ENCODE measurements at regions of chr9 and their contacts with region 1.

Region 1: DNA sequence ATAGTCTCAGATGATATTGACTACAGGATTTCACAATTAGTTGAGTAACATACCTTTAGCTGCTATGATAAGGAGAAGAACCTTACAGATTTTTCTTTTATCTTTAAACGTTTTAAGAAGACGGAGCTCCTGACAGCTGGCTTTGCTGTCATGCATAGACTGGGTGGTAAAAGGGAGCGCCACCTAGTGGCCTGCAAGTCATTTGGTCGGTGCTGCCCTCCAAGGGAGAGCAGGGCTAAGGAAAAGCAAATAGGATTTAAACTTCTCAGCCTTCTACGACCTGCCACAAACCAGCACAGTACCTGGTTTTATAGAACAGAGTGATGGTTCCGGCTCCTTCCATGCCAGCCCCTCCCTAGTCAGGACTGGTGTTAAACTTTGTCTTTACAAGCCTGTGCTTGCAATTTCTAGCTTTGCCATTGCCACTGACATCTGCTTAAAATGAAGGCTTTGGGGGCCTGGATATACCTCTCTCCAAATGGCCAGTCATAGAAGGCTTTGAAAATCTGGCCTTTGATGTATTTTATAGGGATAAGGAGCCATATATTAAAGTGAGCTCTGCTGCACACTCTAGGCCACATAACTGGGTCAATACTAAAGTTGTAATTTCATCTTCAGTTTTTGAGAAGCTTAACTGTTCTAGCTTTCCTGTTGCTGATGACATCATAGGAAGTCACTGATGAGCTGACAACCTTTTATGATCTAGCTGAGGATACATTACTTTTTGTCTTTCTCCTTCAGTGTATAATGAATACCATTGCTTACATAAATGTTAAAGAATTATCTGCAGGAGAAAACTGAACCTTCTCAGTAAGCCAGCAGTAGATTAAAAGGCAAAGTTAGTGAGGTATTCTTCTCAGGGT is 31.1 kb upstream of the ADAMTSL1 start:
- H3K4me3 ChIP-seq: no peak overlapping the region
- H3K27ac ChIP-seq: no peak overlapping the region
- H3K4me1 ChIP-seq: no peaks in the 10 kb centered on the region; the same call in 1 of the 2 replicates
- CTCF ChIP-seq: peak; percentile 56; the same call in 1 of the 2 replicates

Region 2: GRCh38 chr9:18238254-18238653 is 204.6 kb before region 1 on chr9:
- CTCF ChIA-PET with region 1: interaction called, 12 read pairs
- POLR2A ChIA-PET with region 1: no interaction called
- H3K4me3 ChIP-seq: no peak overlapping the region
- H3K27ac ChIP-seq: no peak overlapping the region
- H3K4me1 ChIP-seq: peaks cover 2% of the 10 kb centered on the region; the same call in 1 of the 2 replicates
- CTCF ChIP-seq: no peak

Region 3: DNA sequence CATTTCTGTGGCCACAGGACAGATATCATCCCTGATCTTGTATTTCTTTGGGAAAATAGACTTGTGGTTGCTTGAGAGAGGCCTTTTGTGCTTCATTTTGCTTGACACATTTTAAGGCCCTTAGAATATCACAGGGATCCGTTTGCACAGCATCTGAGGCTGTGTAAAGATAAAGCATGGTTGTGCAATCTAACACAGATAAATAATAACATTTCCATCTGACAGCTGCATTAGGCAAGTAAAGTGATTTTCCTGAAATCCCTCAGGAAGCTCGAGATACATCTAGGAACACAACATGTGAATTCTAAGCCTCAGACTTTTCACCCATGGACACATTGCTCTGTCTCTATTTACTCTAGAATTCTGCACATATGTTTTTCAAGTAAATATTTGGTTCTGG is 181.7 kb before region 1 on chr9:
- CTCF ChIA-PET with region 1: interaction called, 117 read pairs
- POLR2A ChIA-PET with region 1: interaction called, 3 read pairs
- H3K4me3 ChIP-seq: no peak overlapping the region
- H3K27ac ChIP-seq: no peak overlapping the region
- H3K4me1 ChIP-seq: peaks cover 2% of the 10 kb centered on the region; the same call in 1 of the 2 replicates
- CTCF ChIP-seq: no peak

Region 4: DNA sequence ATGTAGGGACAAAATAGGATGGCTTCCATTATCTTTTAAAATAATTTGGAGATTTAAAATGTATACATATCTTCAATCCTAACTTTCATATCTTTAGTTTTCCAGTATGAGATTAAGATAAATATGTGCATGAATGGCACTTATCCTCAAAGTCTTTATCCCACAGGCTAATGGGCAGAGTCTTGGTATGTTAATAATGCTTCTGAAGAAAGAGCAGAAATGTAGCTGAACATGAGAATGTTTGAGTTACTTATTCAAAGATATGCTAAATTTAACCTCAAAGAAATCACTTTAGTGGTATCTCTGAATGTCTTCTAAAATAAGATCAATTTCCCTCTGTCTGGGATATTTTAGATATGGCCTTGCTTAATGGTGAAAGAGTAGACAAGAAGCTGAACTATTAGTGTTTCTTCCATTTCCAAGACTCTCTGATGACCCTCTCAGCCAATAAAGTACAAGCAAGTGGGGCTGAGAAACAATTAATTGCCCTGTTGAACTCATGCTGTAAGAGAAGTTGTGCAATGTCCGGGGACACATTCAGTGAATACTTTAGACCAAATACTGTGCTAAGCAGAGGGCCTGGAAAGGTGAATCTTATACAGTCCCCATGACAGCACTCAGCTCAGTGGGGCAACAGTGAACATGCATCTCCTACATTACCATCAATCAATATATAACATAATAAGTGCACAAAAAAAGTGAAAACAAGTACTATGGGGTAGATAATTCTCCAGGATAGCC is 18.9 kb before region 1 on chr9:
- CTCF ChIA-PET with region 1: interaction called, 33 read pairs
- POLR2A ChIA-PET with region 1: no interaction called
- H3K4me3 ChIP-seq: no peak overlapping the region
- H3K27ac ChIP-seq: no peak overlapping the region
- H3K4me1 ChIP-seq: peaks cover 4% of the 10 kb centered on the region
- CTCF ChIP-seq: no peak

Region 5: DNA sequence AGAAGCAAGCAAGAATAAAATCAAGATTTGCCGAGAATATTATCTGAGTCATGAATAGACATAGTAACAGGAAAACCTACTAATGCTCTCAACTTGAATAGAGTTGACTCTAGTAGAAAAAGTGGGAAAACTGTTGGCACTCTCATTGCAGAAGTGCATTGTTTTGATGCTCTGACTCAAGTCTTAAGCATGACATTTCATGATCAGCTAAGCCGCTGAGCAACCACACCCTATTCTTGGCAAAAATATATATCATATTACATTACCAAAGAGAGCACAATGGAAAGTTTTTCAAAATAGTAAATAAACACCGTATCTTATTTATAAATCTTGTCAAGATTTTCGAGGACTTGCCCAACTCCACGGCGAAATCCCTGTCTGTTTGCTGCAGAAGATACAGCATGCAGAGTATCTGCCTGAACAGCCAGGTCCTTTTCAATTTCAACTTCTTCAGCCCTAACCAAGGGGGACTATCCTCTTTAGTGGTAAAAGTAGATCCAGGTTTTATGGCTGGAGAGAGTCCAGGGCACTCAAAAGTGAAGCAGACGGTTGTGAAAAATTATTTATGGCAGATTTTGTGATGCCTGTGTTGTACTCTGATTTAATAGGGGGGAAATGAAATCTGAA is 17.2 kb after region 1 on chr9:
- CTCF ChIA-PET with region 1: interaction called, 99 read pairs
- POLR2A ChIA-PET with region 1: no interaction called
- H3K4me3 ChIP-seq: no peak overlapping the region
- H3K27ac ChIP-seq: no peak overlapping the region
- H3K4me1 ChIP-seq: no peaks in the 10 kb centered on the region
- CTCF ChIP-seq: no peak

Region 6: DNA sequence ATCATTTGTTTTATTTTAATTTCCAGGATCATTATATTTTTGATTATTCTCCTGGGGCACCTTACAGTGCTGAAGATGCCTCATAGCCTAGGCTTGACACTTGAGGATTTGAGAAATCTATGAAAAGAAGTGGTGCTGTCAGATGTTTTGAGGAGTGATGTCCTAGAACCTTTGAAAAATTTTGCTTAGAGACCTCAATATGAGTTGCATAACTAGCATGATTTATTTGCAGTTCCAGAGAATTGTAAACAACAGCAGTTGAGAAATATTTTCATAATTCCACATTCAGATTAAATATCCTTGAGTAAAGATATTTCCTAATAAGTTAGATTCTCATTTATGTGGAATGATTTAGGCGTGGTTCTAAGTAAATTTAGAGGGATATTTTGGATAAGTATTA is 256.9 kb after region 1 on chr9:
- CTCF ChIA-PET with region 1: no interaction called
- POLR2A ChIA-PET with region 1: no interaction called
- H3K4me3 ChIP-seq: no peak overlapping the region
- H3K27ac ChIP-seq: no peak overlapping the region
- H3K4me1 ChIP-seq: 0 out of 2 replicates have a peak, but pooled peaks cover 2% of the 10 kb centered on the region
- CTCF ChIP-seq: no peak

Region 7: DNA sequence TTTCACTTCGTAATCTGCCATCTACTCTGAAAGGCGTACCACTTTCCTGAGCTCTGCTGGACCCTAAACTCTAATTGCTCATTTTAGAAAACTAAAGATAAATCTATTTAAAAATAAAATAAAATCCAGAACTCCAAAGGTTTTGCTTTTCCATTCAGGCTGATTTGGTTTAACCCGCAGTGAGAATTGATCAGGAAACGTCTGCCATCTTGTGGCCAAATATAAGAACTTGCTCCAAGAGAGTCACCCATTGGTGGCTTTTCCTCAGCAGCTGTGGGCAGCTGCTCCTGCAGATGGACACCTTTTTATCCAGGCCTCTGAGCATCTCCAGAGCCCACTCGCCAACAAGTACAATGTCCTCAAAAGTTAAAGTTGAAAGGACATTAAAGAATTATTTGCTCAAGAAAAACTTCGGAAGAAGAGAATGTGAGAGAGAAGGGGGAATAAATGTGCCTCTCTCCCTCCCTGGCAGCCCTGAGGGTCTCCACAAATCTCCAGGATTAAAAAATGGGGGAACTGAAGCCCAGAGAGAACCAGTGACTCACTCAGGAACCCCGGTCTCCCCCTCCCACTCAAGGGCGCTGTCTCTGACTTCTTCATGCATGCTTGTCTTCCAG is 586.1 kb after region 1 on chr9:
- CTCF ChIA-PET with region 1: interaction called, 18 read pairs
- POLR2A ChIA-PET with region 1: no interaction called
- H3K4me3 ChIP-seq: no peak overlapping the region
- H3K27ac ChIP-seq: no peak overlapping the region
- H3K4me1 ChIP-seq: no peaks in the 10 kb centered on the region
- CTCF ChIP-seq: no peak